ENCODE measurements at regions of chr4 and their contacts with region 1.

Region 1: GRCh38 chr4:112938461-112939058 is 110.9 kb upstream of the ANK2 start:
- DNase-seq: peak; percentile 46
- CTCF ChIP-seq: peak; percentile 31

Region 2: DNA sequence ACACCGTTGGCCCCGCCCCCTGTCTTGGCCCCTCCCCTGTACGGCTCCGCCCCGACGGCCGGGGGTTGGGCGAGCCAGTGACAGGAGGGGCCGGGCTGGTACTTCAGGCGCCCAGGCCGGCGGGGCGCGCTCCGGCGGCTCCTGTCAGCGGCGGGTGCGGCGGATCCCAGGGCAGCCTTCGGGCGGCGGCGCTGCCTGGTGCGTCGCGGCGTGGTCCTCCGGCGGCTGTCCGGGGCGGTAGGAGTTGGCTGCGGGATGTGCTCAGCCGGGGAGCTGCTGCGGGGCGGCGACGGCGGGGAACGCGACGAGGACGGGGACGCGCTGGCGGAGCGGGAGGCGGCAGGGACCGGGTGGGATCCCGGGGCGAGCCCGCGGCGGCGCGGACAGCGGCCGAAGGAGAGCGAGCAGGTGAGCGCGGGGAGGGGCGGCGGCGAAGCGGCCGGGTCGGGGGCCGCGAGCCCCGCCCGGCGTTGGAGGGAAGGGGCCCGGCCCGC is 793.2 kb before region 1 on chr4 and contains the start of gene FAM241A:
- in situ Hi-C with region 1: no loop called
- DNase-seq: peak; percentile 97
- CTCF ChIP-seq: no peak

Region 3: DNA sequence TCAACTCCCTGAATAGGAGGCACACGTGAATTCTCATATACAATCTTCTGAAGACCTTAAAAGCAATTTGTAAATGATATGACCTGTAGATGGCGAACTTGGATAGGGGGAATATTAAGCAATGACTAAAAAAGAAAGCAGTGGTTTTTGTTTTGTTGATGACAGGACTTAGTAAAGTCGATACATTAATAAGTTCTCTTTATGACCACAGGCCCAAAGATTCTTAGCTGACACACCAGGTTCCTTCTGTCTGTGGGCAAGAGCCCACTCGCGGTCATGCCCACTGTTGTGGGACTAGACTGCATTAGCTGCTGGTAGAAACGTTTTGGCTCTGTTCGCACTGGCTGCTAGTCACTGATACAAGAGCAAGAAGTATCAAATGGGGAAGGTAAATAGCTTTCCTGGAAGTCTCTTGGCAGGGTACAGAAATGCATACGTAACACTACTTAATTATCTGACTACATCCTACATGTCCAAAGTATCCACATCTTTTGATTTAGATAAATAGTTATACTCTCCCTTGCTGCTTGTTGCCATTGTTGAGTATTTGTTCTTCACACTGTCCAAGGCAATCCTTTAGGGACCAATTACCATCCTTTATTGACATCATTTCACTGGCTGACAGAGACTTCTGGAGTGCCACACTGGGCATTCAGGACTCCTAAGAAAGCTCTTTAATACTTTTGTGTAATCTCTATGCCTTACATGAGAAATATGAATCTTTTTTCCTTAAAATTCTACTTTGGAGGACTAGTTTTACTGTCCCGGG is 610.4 kb before region 1 on chr4:
- in situ Hi-C with region 1: loop called (anchors 25 kb)
- DNase-seq: peak; percentile 41
- CTCF ChIP-seq: peak; percentile 17

Region 4: GRCh38 chr4:112636688-112637551 is 301.6 kb before region 1 on chr4 and contains the starts of genes LARP7 and ZGRF1:
- in situ Hi-C with region 1: loop called (anchors 25 kb)
- DNase-seq: peak; percentile 89
- CTCF ChIP-seq: peak; percentile 75

Region 5: GRCh38 chr4:112704991-112705845 is 233.3 kb before region 1 on chr4:
- in situ Hi-C with region 1: no loop called
- DNase-seq: peak; percentile 36
- CTCF ChIP-seq: no peak

Region 6: DNA sequence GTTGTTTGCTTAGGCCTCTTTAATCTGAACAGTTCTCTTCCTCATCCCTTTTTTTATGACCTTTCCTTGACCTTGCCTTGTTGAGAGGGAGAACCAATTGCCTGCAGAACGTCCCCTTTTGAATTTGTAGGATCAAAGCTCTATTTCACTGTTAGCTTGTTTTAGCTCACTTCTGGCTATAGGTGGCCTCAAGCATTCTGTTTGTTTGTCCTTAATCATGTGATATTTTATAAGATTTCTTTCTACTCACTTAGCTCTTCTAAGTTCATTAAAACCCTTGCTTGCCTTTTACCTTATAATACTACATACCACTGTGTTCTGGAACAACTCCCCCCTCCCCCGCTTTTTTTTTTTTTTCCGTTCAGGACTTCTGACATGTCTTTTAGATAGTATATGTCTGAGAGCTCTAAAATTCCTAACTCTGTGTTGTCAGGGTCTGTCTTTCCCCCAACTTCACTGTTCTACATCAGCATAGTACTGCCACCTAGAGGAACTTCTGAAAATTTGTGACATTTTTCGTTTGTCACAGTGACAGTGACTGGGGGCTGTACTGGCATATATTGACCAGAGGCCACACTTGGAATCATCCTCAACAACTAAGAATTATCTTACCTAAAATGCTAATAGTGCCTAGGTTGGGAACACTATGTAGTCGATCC is 173.1 kb before region 1 on chr4:
- in situ Hi-C with region 1: loop called (anchors 10 kb)
- DNase-seq: peak; percentile 59
- CTCF ChIP-seq: peak; percentile 46

Region 7: DNA sequence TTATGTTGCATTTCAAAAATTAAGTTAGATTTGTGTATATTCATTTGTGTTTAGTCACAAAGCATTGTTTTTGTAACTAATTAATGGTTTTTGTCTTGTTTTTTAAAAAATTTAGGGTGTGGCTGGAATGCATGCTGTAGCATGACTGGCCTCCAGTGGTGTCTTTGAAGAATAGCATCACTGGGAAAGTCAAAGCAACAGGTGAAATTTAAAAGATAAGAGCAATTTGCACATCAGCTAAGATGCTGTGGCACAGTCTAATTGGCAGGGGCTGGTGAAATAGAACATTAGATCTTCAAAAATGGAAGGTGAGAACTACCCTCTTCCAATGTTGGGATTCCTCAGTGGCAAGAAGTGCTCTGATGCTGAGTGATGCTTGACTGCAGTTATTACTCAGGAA is 156.2 kb after region 1 on chr4:
- in situ Hi-C with region 1: loop called (anchors 10 kb)
- DNase-seq: peak; percentile 17
- CTCF ChIP-seq: peak; percentile 63